WTC11 (cell line): ENCODE measurements at regions of chr7 and their contacts with region 1.

Region 1: DNA sequence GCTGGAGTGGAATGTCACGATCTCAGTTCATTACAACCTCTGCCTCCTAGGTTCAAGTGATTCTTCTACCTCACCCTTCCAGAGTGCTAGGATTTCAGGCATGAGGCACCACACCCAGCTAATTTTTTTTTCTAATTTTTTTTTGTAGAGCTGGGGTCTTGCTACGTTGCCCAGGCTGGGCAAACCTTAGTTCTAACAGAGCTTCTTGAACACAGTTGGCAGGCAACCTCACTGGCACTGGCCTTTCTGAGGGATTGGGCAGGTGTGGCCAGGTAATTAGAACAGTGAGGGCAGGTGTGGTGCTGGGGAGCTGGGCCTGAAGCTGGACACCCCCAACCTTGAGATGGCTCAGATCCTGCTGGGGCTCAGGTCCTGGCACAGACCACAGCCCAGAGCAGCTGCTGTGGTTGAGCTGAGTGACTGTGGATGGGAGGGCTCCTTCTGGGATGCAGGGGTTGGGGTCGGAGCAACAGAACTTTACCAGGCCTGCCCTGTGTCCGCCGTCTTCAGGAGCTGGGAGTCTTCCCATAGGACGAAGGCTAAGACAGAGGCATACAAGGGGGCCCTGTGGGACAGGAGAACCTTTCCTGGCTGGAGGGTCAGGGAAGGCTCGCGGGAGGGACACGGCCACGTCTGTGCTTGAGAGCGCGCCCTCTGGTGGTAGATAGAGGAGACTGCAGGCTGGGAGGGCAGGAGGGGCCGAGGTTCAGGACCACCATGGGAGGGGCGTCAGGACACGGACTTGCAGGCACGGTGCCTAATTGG is 48.2 kb downstream of the COL26A1 start:
- DNase-seq: peak; percentile 91
- ATAC-seq: peak; percentile 93
- H3K4me3 Mint-ChIP-seq: no peak overlapping the region
- H3K27ac Mint-ChIP-seq: peak overlapping the region; percentile 94
- H3K4me1 Mint-ChIP-seq: peaks cover 25% of the 10 kb centered on the region
- H3K27me3 Mint-ChIP-seq: no peaks in the 10 kb centered on the region
- CTCF ChIP-seq: peak; percentile 99

Region 2: DNA sequence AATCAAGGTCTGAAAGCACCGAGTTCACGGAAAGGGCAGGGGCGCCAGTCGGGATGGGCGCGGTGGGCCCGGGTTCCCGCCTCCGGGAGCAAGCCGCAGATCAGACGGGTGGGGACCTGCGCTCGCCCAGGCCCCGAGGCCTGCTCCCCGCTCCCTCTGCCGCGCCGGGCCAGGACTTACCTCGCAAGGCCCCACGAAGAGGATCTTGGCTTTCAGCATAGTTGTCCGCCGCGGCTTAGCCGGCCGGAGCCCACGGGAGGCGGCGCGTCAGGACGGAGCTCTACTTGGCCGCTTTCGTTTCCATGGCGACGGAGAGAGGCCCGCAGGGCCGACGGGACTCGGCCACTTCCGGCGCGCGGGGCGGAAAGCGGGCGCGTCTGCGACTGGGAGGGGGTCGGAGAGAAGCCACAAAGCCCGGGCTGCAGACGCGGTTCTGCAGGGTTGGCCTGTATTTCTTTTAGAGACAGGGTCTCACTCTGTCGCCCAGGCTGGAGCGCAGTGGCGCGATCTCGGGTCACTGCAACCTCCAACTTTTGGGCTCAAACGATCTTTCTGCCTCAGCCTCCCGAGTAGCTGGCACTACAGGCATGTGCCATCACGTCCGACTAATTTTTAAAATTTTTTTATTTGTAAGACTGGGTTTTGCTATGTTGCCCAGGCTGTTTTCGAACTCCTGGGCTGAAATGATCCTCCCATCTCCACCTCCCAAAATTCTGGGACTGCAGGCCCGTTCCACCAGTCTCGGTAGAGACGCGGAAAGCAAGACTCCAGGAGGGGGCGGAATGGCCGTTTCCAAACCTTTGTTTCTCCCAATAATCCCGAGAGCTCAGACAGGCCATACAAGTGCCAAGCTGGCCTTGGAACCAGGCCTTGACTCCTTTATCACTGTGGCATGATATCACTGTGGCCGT is 89.2 kb before region 1 on chr7 and contains the start of gene IFT22:
- CTCF ChIA-PET with region 1: interaction called, 22 read pairs
- POLR2A ChIA-PET with region 1: no interaction called
- DNase-seq: peak; percentile 90
- ATAC-seq: peak; percentile 92
- H3K4me3 Mint-ChIP-seq: peak within 1 kb of the TSS; percentile 93
- H3K27ac Mint-ChIP-seq: peak within 1 kb of the TSS; percentile 96
- H3K4me1 Mint-ChIP-seq: peaks cover 12% of the 10 kb centered on the region
- H3K27me3 Mint-ChIP-seq: no peaks in the 10 kb centered on the region
- CTCF ChIP-seq: no peak
- total RNA-seq, gene IFT22: 13.7 to 16.6 TPM (median 15.5 TPM) in 3 replicates

Region 3: DNA sequence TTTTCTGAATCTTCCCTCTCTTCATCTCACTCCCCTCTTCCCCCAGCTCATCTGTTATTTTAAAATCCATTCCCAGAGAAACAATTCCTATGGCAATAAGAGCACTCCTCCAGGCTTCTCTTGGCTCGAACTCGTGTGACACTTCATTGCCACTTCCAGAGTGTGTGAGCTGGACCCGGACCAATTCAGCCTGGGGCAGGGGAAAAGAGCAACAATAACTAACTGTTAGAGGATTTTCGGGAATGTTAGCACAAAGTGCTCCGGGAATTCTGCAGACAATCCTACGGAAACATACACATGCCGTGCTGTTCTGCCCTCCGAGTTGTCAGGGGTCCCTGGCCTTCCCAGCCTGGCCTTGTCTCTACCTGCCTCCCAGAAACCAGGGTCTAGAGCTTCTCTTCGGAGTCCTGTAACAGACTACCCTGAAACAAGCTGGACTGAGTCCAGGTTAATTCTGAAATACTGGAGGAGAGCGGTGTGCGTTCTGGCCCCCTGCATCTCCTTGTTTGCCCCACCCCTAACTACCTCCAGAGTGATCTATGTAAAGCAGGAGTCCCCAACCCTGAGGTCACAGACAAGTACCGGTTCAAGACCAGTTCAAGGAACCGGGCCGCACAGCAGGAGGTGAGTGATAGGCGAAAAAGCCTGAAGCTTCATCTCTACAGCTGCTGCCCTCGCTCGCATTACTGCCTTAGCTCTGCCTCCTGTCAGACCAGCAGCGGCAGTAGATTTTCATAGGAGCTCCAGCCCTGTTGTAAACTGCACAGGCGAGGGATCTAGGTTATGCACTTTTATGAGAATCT is 36.9 kb before region 1 on chr7:
- CTCF ChIA-PET with region 1: interaction called, 31 read pairs
- POLR2A ChIA-PET with region 1: interaction called, 3 read pairs
- DNase-seq: peak; percentile 37
- ATAC-seq: no peak
- H3K4me3 Mint-ChIP-seq: no peak overlapping the region
- H3K27ac Mint-ChIP-seq: peak overlapping the region; percentile 29
- H3K4me1 Mint-ChIP-seq: peaks cover 21% of the 10 kb centered on the region
- H3K27me3 Mint-ChIP-seq: no peaks in the 10 kb centered on the region
- CTCF ChIP-seq: no peak

Region 4: DNA sequence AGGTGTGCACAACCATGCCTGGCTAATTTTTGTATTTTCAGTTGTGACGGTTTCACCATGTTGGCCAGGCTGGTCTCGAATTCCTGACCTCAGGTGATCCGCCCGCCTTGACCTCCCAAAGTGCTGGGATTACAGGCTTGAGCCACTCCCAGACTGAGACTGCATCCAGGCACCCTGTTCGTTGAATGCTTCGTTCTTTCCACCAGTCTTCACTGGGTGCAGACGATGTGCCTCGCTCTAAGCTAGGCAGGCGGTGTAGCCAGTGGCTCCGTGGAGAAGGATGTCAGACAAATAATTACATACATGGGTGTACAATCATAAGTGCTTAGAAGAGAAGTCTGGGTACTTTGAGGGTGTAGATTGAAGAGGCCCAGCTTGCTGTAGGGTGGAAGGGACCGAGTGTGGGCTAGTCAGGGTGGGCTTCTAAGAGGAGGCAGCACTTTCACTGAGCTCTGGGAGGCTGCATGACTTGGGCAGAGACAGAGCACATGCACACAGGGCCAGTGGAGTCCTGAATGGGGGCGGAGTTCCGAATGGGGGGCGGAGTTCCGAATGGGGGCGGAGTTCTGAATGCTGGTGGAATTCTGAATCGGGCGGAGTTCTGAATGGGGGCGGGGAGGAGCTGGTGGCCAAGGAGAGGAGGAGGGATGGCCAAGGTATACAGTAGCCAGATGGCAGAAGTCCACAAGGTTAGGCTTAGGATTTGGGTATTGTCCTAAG is 26.1 kb after region 1 on chr7:
- CTCF ChIA-PET with region 1: interaction called, 37 read pairs
- POLR2A ChIA-PET with region 1: interaction called, 6 read pairs
- DNase-seq: peak; percentile 94
- ATAC-seq: peak; percentile 87
- H3K4me3 Mint-ChIP-seq: no peak overlapping the region
- H3K27ac Mint-ChIP-seq: peak overlapping the region; percentile 79
- H3K4me1 Mint-ChIP-seq: peaks cover 26% of the 10 kb centered on the region
- H3K27me3 Mint-ChIP-seq: no peaks in the 10 kb centered on the region
- CTCF ChIP-seq: no peak